ENCODE measurements at regions of chr5 and their contacts with region 1.

Region 1: GRCh38 chr5:142145106-142145900 is 36.7 kb downstream of the NDFIP1 start:
- DNase-seq: no peak
- H3K4me3 ChIP-seq: no peak overlapping the region
- H3K27ac ChIP-seq: peak overlapping the region in 1 of 4 donors; percentile 15
- H3K4me1 ChIP-seq: peaks cover 0 to 7% (median 2%) of the 10 kb centered on the region in 4 donors
- H3K27me3 ChIP-seq: no peaks in the 10 kb centered on the region
- CTCF ChIP-seq: peak; percentile 57 to 73 (median 60)
- EP300 ChIP-seq: no peak
- POLR2A ChIP-seq: no peak

Region 2: GRCh38 chr5:141691867-141692532 is 453.3 kb before region 1 on chr5:
- intact Hi-C with region 1: loop called (anchors 10 kb)
- DNase-seq: peak; percentile 93
- H3K4me3 ChIP-seq: peak overlapping the region; percentile 30 to 46 (median 37)
- H3K27ac ChIP-seq: no peak overlapping the region
- H3K4me1 ChIP-seq: peaks cover 9 to 15% (median 10%) of the 10 kb centered on the region in 4 donors
- H3K27me3 ChIP-seq: peaks cover 0 to 50% (median 0%) of the 10 kb centered on the region in 4 donors
- CTCF ChIP-seq: peak in 2 of 3 experiments; percentile 98
- EP300 ChIP-seq: no peak
- POLR2A ChIP-seq: no peak

Region 3: DNA sequence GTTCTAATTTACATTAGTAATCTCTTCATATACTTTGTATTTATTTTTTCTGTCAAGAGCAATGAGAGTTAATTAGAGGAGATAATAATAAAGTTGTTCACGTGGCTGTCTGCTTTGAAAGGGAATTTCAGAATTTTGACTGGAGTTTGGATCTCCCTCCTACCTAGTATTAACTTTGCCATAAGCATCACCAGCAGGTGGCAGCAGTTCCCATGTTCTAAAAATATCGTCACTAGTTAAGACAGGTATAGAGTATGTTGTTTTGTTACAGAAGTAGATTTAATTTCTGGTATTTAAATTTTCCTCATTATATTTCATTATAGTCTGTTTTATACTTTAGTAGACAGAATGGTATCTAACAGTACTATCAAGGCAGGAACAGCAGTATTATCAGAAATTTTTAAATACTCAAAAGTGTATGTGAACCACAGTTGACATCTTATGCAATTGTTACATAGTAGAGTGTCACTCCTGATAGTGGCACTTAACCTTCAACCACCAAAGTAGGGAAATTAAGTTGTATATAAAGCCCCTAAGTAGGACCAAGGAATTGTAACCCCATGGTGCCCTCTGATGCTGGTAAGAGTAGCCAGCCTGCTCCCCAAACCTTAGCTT is 152.8 kb before region 1 on chr5:
- intact Hi-C with region 1: loop called (anchors 5 kb)
- DNase-seq: no peak
- H3K4me3 ChIP-seq: no peak overlapping the region
- H3K27ac ChIP-seq: peak overlapping the region in 1 of 4 donors; percentile 16
- H3K4me1 ChIP-seq: peaks cover 5 to 25% (median 6%) of the 10 kb centered on the region in 4 donors
- H3K27me3 ChIP-seq: no peaks in the 10 kb centered on the region
- CTCF ChIP-seq: peak; percentile 69 to 81 (median 72)
- EP300 ChIP-seq: no peak
- POLR2A ChIP-seq: no peak

Region 4: GRCh38 chr5:142000703-142001484 is 144.4 kb before region 1 on chr5:
- intact Hi-C with region 1: loop called (anchors 5 kb)
- DNase-seq: no peak
- H3K4me3 ChIP-seq: no peak overlapping the region
- H3K27ac ChIP-seq: peak overlapping the region in 1 of 4 donors; percentile 11
- H3K4me1 ChIP-seq: no peaks in the 10 kb centered on the region
- H3K27me3 ChIP-seq: no peaks in the 10 kb centered on the region
- CTCF ChIP-seq: peak; percentile 14 to 32 (median 17)
- EP300 ChIP-seq: no peak
- POLR2A ChIP-seq: no peak

Region 5: GRCh38 chr5:142245581-142246185 is 100.4 kb after region 1 on chr5:
- intact Hi-C with region 1: no loop called
- DNase-seq: no peak
- H3K4me3 ChIP-seq: no peak overlapping the region
- H3K27ac ChIP-seq: peak overlapping the region in 3 of 4 donors; percentile 29 to 58 (median 50)
- H3K4me1 ChIP-seq: peaks cover 10 to 30% (median 21%) of the 10 kb centered on the region in 4 donors
- H3K27me3 ChIP-seq: no peaks in the 10 kb centered on the region
- CTCF ChIP-seq: no peak
- EP300 ChIP-seq: no peak
- POLR2A ChIP-seq: no peak

Measured in esophagus muscularis mucosa (tissue), 4 donors.